Activated CD4-positive, alpha-beta memory T cell treated with anti-CD3 and anti-CD28 coated beads for 36 hours (primary cell): ENCODE measurements at regions of chr5 and their contacts with region 1.

Region 1: GRCh38 chr5:82351754-82352145 is 73.6 kb upstream of the RPS23 start:
- DNase-seq: no peak
- H3K4me3 Mint-ChIP-seq: no peak overlapping the region
- H3K27ac Mint-ChIP-seq: no peak overlapping the region
- H3K4me1 Mint-ChIP-seq: peaks cover 18% of the 10 kb centered on the region
- H3K27me3 Mint-ChIP-seq: no peaks in the 10 kb centered on the region

Region 2: GRCh38 chr5:82494942-82495341 is 143.2 kb after region 1 on chr5:
- CTCF ChIA-PET with region 1: interaction called, 5 read pairs
- POLR2A ChIA-PET with region 1: no interaction called
- intact Hi-C with region 1: loop called (anchors 10 kb)
- DNase-seq: no peak
- H3K4me3 Mint-ChIP-seq: no peak overlapping the region
- H3K27ac Mint-ChIP-seq: no peak overlapping the region
- H3K4me1 Mint-ChIP-seq: peaks cover 6% of the 10 kb centered on the region
- H3K27me3 Mint-ChIP-seq: no peaks in the 10 kb centered on the region

Region 3: GRCh38 chr5:82641331-82642003 is 289.7 kb after region 1 on chr5:
- CTCF ChIA-PET with region 1: interaction called, 7 read pairs
- POLR2A ChIA-PET with region 1: no interaction called
- intact Hi-C with region 1: loop called (anchors 2 kb)
- DNase-seq: peak; percentile 12
- H3K4me3 Mint-ChIP-seq: no peak overlapping the region
- H3K27ac Mint-ChIP-seq: no peak overlapping the region
- H3K4me1 Mint-ChIP-seq: no peaks in the 10 kb centered on the region
- H3K27me3 Mint-ChIP-seq: no peaks in the 10 kb centered on the region

Region 4: GRCh38 chr5:83430130-83431010 is 1078.6 kb after region 1 on chr5:
- CTCF ChIA-PET with region 1: interaction called, 5 read pairs
- POLR2A ChIA-PET with region 1: no interaction called
- intact Hi-C with region 1: loop called (anchors 1 kb)
- DNase-seq: peak; percentile 67
- H3K4me3 Mint-ChIP-seq: no peak overlapping the region
- H3K27ac Mint-ChIP-seq: no peak overlapping the region
- H3K4me1 Mint-ChIP-seq: no peaks in the 10 kb centered on the region
- H3K27me3 Mint-ChIP-seq: no peaks in the 10 kb centered on the region